A549 (cell line): ENCODE measurements at regions of chr19 and their contacts with region 1.

Region 1: DNA sequence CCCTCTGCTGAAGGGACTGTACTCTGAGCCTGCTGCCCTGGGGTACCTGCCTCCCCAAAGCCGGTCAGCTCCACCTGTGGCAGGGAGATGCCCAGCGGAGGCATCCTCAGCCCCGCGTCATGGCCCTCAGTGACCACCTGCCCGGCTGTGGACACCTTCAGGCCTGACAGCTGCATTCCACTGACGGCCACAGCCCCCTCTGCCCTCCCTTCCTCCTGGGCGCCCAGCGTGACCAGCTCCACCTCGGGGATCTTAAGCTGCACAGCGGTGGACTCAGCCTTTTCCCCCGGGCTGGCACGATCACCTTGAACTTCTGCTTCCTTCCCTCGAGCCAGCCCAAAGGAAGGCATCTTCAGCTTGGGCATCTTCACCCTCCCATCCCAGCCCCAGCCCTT is 4.8 kb upstream of the HIPK4 start:
- DNase-seq: no peak
- ATAC-seq: no peak
- H3K4me3 ChIP-seq: no peak overlapping the region
- H3K27ac ChIP-seq: no peak overlapping the region
- H3K4me1 ChIP-seq: no peaks in the 10 kb centered on the region
- CTCF ChIP-seq: no peak
- EP300 ChIP-seq: no peak
- POLR2A ChIP-seq: no peak
- RAD21 ChIP-seq: no peak

Region 2: DNA sequence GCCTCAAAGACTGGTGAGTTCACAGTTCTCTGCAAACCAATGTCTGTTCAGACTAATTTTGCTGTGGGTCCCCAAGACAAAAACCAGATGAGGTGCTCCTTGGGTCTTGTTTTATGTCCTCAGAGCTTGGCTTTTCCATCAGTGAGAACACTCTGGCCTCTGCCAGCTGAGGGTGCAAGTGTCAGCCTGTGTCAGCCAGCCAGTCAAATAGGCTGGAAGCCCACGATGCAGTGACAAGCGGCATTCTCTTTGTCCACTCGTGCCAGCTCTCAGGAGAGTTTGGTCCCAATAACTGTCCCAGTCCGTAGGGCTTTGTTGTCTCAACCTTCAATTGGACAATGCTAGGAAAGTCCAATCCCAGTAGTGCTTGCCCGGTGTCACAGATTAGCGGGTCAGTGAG is 100.3 kb before region 1 on chr19:
- CTCF ChIA-PET with region 1: no interaction called
- POLR2A ChIA-PET with region 1: no interaction called
- DNase-seq: no peak
- ATAC-seq: peak in 1 of 2 experiments; percentile 13; a peak in 1 of 6 replicates
- H3K4me3 ChIP-seq: no peak overlapping the region
- H3K27ac ChIP-seq: no peak overlapping the region
- H3K4me1 ChIP-seq: no peaks in the 10 kb centered on the region
- CTCF ChIP-seq: no peak
- EP300 ChIP-seq: no peak
- POLR2A ChIP-seq: no peak
- RAD21 ChIP-seq: no peak

Region 3: DNA sequence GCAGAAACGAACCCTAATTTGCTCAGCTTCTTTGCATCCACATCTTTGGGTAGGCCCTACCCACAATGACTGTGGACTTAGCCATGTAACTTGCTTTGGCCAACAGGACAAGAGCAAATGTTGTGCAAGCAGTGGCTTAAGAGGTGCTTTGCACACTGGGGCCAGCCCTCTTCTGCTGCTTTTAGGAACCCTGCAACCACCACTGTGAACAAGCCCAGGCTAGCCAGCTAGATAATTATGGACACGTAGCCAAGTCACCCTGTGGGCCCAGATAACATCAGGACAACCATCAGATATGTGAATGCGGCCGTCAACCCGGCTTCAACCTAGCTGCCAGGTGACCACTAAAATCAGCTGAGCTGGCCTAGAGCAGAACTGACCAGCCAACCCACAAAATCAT is 63.7 kb before region 1 on chr19:
- CTCF ChIA-PET with region 1: no interaction called
- POLR2A ChIA-PET with region 1: no interaction called
- DNase-seq: no peak
- ATAC-seq: no peak
- H3K4me3 ChIP-seq: no peak overlapping the region
- H3K27ac ChIP-seq: no peak overlapping the region
- H3K4me1 ChIP-seq: no peaks in the 10 kb centered on the region
- CTCF ChIP-seq: no peak
- EP300 ChIP-seq: no peak
- POLR2A ChIP-seq: no peak
- RAD21 ChIP-seq: no peak

Region 4: GRCh38 chr19:40381321-40381720 is 13.5 kb before region 1 on chr19:
- CTCF ChIA-PET with region 1: interaction called, 35 read pairs
- POLR2A ChIA-PET with region 1: no interaction called
- DNase-seq: peak in 1 of 2 experiments; percentile 68
- ATAC-seq: peak; percentile 27 to 43; a peak in 3 of 6 replicates
- H3K4me3 ChIP-seq: no peak overlapping the region
- H3K27ac ChIP-seq: no peak overlapping the region
- H3K4me1 ChIP-seq: no peaks in the 10 kb centered on the region
- CTCF ChIP-seq: no peak
- EP300 ChIP-seq: no peak
- POLR2A ChIP-seq: no peak
- RAD21 ChIP-seq: no peak

Region 5: GRCh38 chr19:40411125-40411842 is 16.5 kb after region 1 on chr19:
- CTCF ChIA-PET with region 1: interaction called, 11 read pairs
- POLR2A ChIA-PET with region 1: no interaction called
- DNase-seq: no peak
- ATAC-seq: peak; percentile 19 to 31; a peak in 5 of 6 replicates
- H3K4me3 ChIP-seq: no peak overlapping the region
- H3K27ac ChIP-seq: peak overlapping the region in 1 of 2 experiments; percentile 52; a peak in 3 of 6 replicates
- H3K4me1 ChIP-seq: peaks cover 12% of the 10 kb centered on the region; the same call in 1 of the 3 replicates
- CTCF ChIP-seq: no peak
- EP300 ChIP-seq: no peak
- POLR2A ChIP-seq: no peak
- RAD21 ChIP-seq: no peak

Region 6: GRCh38 chr19:40416918-40417642 is 22.3 kb after region 1 on chr19:
- CTCF ChIA-PET with region 1: interaction called, 19 read pairs
- POLR2A ChIA-PET with region 1: interaction called, 6 read pairs
- DNase-seq: peak in 1 of 2 experiments; percentile 71
- ATAC-seq: peak in 1 of 2 experiments; percentile 0; a peak in 1 of 6 replicates
- H3K4me3 ChIP-seq: no peak overlapping the region
- H3K27ac ChIP-seq: peak overlapping the region; percentile 37 to 75
- H3K4me1 ChIP-seq: peaks cover 17% of the 10 kb centered on the region
- CTCF ChIP-seq: no peak
- EP300 ChIP-seq: no peak
- POLR2A ChIP-seq: no peak
- RAD21 ChIP-seq: no peak